Activated naive CD4-positive, alpha-beta T cell treated with anti-CD3 and anti-CD28 coated beads, Interleukin-2, amount 10 ng/mL, durations not matched to agents 7 days and 5 days (primary cell): ENCODE measurements at regions of chr4 and their contacts with region 1.

Region 1: DNA sequence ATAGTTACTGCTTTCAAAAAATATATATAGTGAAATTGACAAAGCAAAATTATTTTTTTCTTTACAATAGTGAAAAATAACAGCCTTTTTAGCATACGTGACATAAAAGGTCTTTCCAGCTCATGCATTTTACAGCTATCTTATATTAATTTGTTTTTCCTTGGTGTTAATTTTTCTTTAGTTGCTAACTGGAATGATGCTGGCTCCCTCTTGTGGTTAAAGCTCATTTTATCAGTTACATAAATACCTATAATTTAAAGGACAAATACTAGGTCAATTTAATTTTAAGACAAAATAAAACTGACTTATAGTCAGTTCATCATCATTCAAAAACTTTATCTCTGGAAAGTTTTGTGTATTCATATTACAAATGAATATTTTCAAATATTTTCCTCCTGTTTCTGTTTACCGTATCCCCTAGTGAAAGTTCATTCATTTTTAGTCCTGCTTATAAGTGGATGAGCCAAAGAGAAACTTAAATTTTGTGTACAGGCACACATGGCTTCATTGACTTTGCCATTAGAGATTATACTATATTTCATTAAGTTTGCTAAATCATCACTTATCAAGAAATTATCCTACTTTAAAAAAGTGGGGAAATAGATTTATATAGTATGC is 9.9 kb upstream of the ANAPC4 start:
- DNase-seq: no peak
- H3K4me3 Mint-ChIP-seq: no peak overlapping the region
- H3K27ac Mint-ChIP-seq: no peak overlapping the region
- H3K4me1 Mint-ChIP-seq: no peaks in the 10 kb centered on the region
- H3K27me3 Mint-ChIP-seq: no peaks in the 10 kb centered on the region

Region 2: GRCh38 chr4:24770032-24770584 is 597.0 kb before region 1 on chr4:
- CTCF ChIA-PET with region 1: no interaction called
- DNase-seq: no peak
- H3K4me3 Mint-ChIP-seq: no peak overlapping the region
- H3K27ac Mint-ChIP-seq: no peak overlapping the region
- H3K4me1 Mint-ChIP-seq: no peaks in the 10 kb centered on the region
- H3K27me3 Mint-ChIP-seq: no peaks in the 10 kb centered on the region

Region 3: GRCh38 chr4:24980064-24980690 is 386.9 kb before region 1 on chr4:
- CTCF ChIA-PET with region 1: interaction called, 34 read pairs
- DNase-seq: peak; percentile 61
- H3K4me3 Mint-ChIP-seq: no peak overlapping the region
- H3K27ac Mint-ChIP-seq: no peak overlapping the region
- H3K4me1 Mint-ChIP-seq: peaks cover 10% of the 10 kb centered on the region
- H3K27me3 Mint-ChIP-seq: peaks cover 36% of the 10 kb centered on the region

Region 4: GRCh38 chr4:25098964-25099891 is 267.9 kb before region 1 on chr4:
- CTCF ChIA-PET with region 1: no interaction called
- DNase-seq: no peak
- H3K4me3 Mint-ChIP-seq: no peak overlapping the region
- H3K27ac Mint-ChIP-seq: no peak overlapping the region
- H3K4me1 Mint-ChIP-seq: peaks cover 8% of the 10 kb centered on the region
- H3K27me3 Mint-ChIP-seq: peaks cover 8% of the 10 kb centered on the region

Region 5: DNA sequence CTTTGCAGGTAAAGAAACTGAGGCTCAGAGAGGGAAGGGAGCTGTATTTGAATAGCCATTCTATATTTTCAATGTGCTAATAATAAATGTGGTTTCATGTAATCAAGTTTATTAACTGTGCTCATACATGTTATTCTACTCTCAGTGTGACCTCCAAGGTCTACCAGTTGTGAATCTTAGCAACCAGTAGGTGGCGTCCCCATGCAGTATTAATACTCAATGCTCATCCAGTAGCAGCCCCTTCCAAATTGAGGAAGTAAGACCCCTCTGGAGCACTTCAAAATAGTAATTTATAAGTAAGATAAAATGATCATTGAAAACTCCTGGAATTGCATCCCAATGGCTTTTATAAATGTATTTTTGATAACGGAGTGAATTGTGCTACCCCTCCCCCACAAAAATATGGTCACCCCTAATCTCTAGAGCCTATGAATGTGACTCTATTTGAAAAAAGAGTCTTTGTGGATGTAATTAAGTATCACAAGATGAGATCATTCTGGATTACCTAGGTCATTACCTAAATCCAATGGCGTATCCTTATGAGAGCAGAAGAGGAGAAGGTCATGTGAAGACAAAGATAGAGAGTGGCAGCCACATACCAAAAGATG is 186.5 kb before region 1 on chr4:
- CTCF ChIA-PET with region 1: interaction called, 35 read pairs
- DNase-seq: peak; percentile 52
- H3K4me3 Mint-ChIP-seq: no peak overlapping the region
- H3K27ac Mint-ChIP-seq: no peak overlapping the region
- H3K4me1 Mint-ChIP-seq: peaks cover 20% of the 10 kb centered on the region
- H3K27me3 Mint-ChIP-seq: no peaks in the 10 kb centered on the region

Region 6: GRCh38 chr4:25312496-25313200 is 54.5 kb before region 1 on chr4 and contains the start of gene ZCCHC4:
- CTCF ChIA-PET with region 1: interaction called, 59 read pairs
- DNase-seq: peak; percentile 89
- H3K4me3 Mint-ChIP-seq: peak within 1 kb of the TSS; percentile 98
- H3K27ac Mint-ChIP-seq: peak within 1 kb of the TSS; percentile 92
- H3K4me1 Mint-ChIP-seq: peaks cover 32% of the 10 kb centered on the region
- H3K27me3 Mint-ChIP-seq: peaks cover 19% of the 10 kb centered on the region

Region 7: GRCh38 chr4:25350561-25350960 is 16.6 kb before region 1 on chr4:
- CTCF ChIA-PET with region 1: interaction called, 10 read pairs
- DNase-seq: no peak
- H3K4me3 Mint-ChIP-seq: no peak overlapping the region
- H3K27ac Mint-ChIP-seq: no peak overlapping the region
- H3K4me1 Mint-ChIP-seq: no peaks in the 10 kb centered on the region
- H3K27me3 Mint-ChIP-seq: no peaks in the 10 kb centered on the region

Region 8: GRCh38 chr4:25386926-25387325 is 19.8 kb after region 1 on chr4:
- CTCF ChIA-PET with region 1: no interaction called
- DNase-seq: no peak
- H3K4me3 Mint-ChIP-seq: no peak overlapping the region
- H3K27ac Mint-ChIP-seq: no peak overlapping the region
- H3K4me1 Mint-ChIP-seq: no peaks in the 10 kb centered on the region
- H3K27me3 Mint-ChIP-seq: no peaks in the 10 kb centered on the region